Transverse colon (tissue), 4 donors: ENCODE measurements at regions of chr6 and their contacts with region 1.

Region 1: GRCh38 chr6:107847844-107848802 is 24.0 kb upstream of the SCML4 start:
- DNase-seq: peak; percentile 88
- H3K4me3 ChIP-seq: peak overlapping the region; percentile 3 to 41 (median 34)
- H3K27ac ChIP-seq: no peak overlapping the region
- H3K4me1 ChIP-seq: peaks cover 0 to 10% (median 3%) of the 10 kb centered on the region in 4 donors
- H3K27me3 ChIP-seq: peaks cover 15% of the 10 kb centered on the region
- CTCF ChIP-seq: peak; percentile 95 to 98 (median 97)
- EP300 ChIP-seq: no peak
- POLR2A ChIP-seq: no peak

Region 2: GRCh38 chr6:107684996-107685395 is 163.1 kb before region 1 on chr6:
- in situ Hi-C with region 1: loop called in 2 of 4 experiments (anchors 5 to 25 kb)
- intact Hi-C with region 1: no loop called
- DNase-seq: no peak
- H3K4me3 ChIP-seq: no peak overlapping the region
- H3K27ac ChIP-seq: no peak overlapping the region
- H3K4me1 ChIP-seq: no peaks in the 10 kb centered on the region
- H3K27me3 ChIP-seq: no peaks in the 10 kb centered on the region
- CTCF ChIP-seq: no peak
- EP300 ChIP-seq: no peak
- POLR2A ChIP-seq: no peak

Region 3: GRCh38 chr6:107811591-107812218 is 36.4 kb before region 1 on chr6:
- in situ Hi-C with region 1: no loop called
- intact Hi-C with region 1: no loop called
- DNase-seq: no peak
- H3K4me3 ChIP-seq: no peak overlapping the region
- H3K27ac ChIP-seq: no peak overlapping the region
- H3K4me1 ChIP-seq: no peaks in the 10 kb centered on the region
- H3K27me3 ChIP-seq: no peaks in the 10 kb centered on the region
- CTCF ChIP-seq: no peak
- EP300 ChIP-seq: no peak
- POLR2A ChIP-seq: no peak